Heart left ventricle (tissue), 16 donors: ENCODE measurements at regions of chr9 and their contacts with region 1.

Region 1: GRCh38 chr9:32968101-32969011 is 33.1 kb downstream of the APTX start:
- DNase-seq: peak in 2 of 5 donors; percentile 29 to 32
- ATAC-seq: peak in 1 of 4 donors; percentile 29
- H3K4me3 ChIP-seq: no peak overlapping the region
- H3K27ac ChIP-seq: no peak overlapping the region
- H3K4me1 ChIP-seq: peaks cover 0 to 10% (median 0%) of the 10 kb centered on the region in 12 donors
- H3K27me3 ChIP-seq: no peaks in the 10 kb centered on the region
- CTCF ChIP-seq: peak; percentile 80 to 94 (median 88)
- POLR2A ChIP-seq: no peak

Region 2: DNA sequence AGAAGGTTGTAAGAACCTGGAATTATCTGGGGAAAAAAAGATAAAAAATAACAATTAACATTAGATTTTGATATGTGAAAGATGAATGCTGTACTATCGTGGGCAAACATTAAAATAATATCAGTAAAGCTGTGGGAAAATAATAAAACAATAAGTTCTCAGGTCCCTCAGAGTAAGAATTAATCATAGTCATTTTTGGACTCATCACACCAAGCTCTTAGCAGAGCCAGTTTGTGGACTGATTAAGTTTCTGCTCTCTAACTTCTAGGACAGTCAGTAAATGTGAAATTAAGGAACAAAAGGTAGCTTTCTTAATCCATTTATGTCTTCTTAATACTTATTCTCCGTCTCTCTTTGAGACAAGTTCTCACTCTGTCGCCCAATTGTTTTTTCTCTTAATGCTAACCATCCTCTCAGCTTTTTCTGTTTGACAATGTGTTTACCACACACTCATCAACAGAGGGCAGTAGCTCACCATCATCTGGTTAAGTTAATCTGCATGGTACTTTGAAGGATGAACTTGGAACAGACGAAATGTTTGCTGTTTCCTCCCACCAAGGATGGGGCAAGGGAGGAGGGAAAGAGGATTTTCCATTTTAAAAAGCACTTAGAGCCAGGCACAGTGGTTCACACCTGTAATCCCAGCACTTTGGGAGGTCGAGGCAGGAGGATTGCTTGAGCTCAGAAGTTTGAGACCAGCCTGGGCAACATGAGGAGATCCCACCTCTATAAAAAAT is 589.2 kb before region 1 on chr9:
- intact Hi-C with region 1: loop called (anchors 2 to 5 kb)
- DNase-seq: peak in 2 of 5 donors; percentile 22 to 40
- ATAC-seq: peak; percentile 65 to 89 (median 86)
- H3K4me3 ChIP-seq: no peak overlapping the region
- H3K27ac ChIP-seq: no peak overlapping the region
- H3K4me1 ChIP-seq: peaks cover 0 to 18% (median 2%) of the 10 kb centered on the region in 12 donors
- H3K27me3 ChIP-seq: peaks cover 0 to 4% (median 0%) of the 10 kb centered on the region in 9 donors
- CTCF ChIP-seq: peak; percentile 62 to 87 (median 77)
- POLR2A ChIP-seq: no peak

Region 3: DNA sequence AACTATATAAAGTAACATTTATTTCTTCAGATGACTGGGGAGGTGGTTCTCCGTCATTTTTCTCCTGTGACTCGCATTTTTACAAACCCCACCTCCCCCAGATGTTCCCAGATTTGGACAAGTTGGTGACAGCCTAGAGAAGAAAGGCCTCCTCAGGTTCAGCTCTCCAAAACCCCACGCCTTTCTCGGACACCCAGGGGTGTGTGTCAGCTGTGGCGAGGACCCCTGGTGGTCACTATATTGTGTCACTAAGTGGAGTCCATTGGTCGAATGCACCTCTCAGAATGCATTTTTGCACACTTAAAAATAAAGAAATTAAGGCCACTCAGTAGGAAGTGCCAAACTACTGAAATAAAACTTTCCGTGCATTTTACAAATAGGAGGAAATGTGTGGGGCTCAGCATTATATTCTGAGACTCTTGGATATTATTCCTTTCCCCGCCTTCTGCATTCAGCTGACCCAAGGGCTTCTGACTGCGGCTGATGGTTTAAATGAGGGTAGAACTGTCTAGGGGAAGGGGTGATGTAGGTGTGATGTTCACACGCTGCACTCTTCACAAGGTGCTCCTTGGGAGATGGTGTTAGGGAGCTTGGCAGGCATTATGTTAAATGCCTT is 536.3 kb before region 1 on chr9:
- intact Hi-C with region 1: loop called in 1 of 10 experiments (anchors 10 kb)
- DNase-seq: peak in 4 of 5 donors; percentile 36 to 49 (median 38)
- ATAC-seq: peak in 2 of 4 donors; percentile 51 to 59
- H3K4me3 ChIP-seq: no peak overlapping the region
- H3K27ac ChIP-seq: no peak overlapping the region
- H3K4me1 ChIP-seq: peaks cover 0 to 3% (median 0%) of the 10 kb centered on the region in 12 donors
- H3K27me3 ChIP-seq: no peaks in the 10 kb centered on the region
- CTCF ChIP-seq: peak; percentile 40 to 64 (median 50)
- POLR2A ChIP-seq: no peak

Region 4: DNA sequence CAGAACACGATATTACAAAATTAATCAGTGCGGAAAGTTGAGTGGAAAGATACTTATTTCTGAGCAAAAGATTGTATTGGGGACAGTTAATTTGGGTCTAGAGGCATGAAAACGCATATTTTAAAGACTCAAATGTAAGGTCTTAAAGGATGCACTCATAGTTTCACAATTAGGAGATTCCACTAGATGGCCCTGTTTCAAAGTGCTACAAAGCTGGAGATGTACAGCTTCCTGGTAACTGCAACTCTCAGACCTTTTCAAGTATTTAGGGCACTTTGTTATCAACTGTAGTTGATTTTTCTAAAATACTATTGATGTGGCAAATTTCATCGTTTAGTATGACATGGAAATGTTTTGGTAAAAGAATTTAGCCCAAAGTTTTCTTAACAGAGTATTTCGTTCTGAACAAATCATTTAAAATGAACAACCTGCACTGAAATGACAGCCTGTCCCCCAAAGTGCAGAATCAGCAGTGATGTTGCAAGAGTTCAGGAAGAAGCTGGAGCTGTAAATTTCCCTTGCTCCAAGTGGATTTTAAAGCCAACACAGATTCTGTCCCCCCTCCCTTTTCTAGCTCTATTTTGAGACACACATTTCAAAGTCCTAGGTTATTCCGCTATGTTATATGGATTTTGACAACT is 379.2 kb before region 1 on chr9:
- intact Hi-C with region 1: loop called (anchors 2 to 5 kb)
- DNase-seq: no peak
- ATAC-seq: no peak
- H3K4me3 ChIP-seq: no peak overlapping the region
- H3K27ac ChIP-seq: no peak overlapping the region
- H3K4me1 ChIP-seq: no peaks in the 10 kb centered on the region
- H3K27me3 ChIP-seq: peaks cover 0 to 8% (median 0%) of the 10 kb centered on the region in 9 donors
- CTCF ChIP-seq: peak in 11 of 12 donors; percentile 21 to 59 (median 43)
- POLR2A ChIP-seq: no peak

Region 5: GRCh38 chr9:32899181-32899580 is 69.2 kb before region 1 on chr9:
- intact Hi-C with region 1: loop called in 1 of 10 experiments (anchors 5 kb)
- DNase-seq: no peak
- ATAC-seq: no peak
- H3K4me3 ChIP-seq: no peak overlapping the region
- H3K27ac ChIP-seq: no peak overlapping the region
- H3K4me1 ChIP-seq: no peaks in the 10 kb centered on the region
- H3K27me3 ChIP-seq: no peaks in the 10 kb centered on the region
- CTCF ChIP-seq: no peak
- POLR2A ChIP-seq: no peak

Region 6: DNA sequence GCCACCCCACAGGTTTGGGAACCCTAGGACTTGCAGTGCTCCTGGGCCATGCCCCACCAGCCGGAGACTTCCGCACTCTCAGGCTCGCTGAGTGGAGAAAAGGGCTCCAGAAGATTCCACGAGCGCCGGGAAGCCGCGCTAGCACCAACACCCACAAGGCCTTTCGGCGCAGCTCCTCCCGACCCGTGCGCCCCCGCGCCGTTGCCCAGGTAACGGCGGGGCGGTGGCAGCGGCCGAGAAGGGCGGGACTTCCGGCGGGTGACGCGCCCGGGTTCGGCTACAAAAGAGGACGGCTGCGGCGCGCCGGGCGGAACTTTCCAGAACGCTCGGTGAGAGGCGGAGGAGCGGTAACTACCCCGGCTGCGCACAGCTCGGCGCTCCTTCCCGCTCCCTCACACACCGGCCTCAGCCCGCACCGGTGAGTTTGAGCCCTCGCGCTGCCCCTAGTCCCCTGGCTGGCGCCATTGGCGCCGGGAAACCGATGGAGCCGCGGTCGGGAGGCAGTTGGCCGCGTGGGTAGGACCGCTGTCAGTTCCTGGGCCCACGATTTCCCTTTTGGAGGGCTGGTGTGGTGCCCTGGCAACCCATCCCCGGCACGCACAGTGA is 56.7 kb after region 1 on chr9 and contains the start of gene DNAJA1:
- intact Hi-C with region 1: no loop called
- DNase-seq: peak; percentile 96 to 98 (median 96)
- ATAC-seq: peak; percentile 96 to 97 (median 97)
- H3K4me3 ChIP-seq: peak within 1 kb of the TSS; percentile 76 to 99 (median 94)
- H3K27ac ChIP-seq: peak within 1 kb of the TSS; percentile 96 to 100 (median 99)
- H3K4me1 ChIP-seq: peaks cover 7 to 65% (median 45%) of the 10 kb centered on the region in 12 donors
- H3K27me3 ChIP-seq: no peaks in the 10 kb centered on the region
- CTCF ChIP-seq: peak in 1 of 12 donors; percentile 10
- POLR2A ChIP-seq: peak; percentile 79 to 99
- total RNA-seq, gene DNAJA1: 48.6 to 104 (median 63.1) TPM